Dorsolateral prefrontal cortex (tissue), 120 donors: ENCODE measurements at regions of chr7 and their contacts with region 1.

Region 1: DNA sequence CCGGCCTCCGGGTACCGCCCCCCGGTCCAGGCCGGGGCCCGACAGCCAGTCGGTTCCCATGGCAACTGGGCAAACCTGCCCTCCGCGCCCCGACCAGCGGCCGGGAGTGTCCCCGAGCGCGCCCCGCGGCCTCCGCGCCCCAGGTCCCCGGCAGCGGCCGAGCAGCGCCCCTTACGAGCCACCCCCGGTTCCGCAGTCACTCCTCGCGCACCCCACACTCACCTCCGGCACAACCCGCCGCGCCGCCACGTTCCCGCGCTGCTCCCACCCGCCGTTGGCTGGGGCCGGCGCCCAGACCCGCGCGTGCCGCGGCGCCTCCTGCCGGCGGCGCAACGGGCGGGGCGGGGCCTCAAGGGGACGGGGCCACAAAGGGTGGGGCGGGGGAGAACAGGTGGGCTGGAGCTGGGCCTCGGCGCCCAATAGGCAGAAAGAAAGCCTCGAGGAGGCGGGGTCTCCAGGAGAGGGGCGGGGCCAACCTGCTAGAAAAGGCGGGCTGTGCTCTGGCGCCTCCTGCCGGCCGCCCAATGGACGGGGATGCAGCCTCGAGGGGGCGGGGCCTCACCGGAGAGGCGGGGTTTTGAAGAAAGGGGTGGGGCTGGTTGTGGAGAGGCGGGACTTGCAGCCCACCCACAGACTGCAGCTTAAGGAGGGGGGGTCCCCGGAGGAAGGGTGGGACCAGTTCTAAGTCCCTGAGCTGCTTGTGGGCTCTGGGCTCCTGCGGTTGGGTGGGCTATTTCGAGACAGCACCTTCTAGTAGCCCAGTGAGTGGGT is at the start of gene RADIL:
- DNase-seq: peak; percentile 85 to 98 (median 94)
- H3K4me3 ChIP-seq: peak within 1 kb of the TSS; percentile 57 to 89 (median 75)
- H3K27ac ChIP-seq: peak within 1 kb of the TSS in 43 of 59 donors; percentile 0 to 82 (median 53)
- H3K27me3 ChIP-seq: no peaks in the 10 kb centered on the region
- CTCF ChIP-seq: peak; percentile 48 to 97 (median 88)
- total RNA-seq, gene RADIL: 4.3 to 23.4 (median 9.7) TPM

Region 2: GRCh38 chr7:4797858-4798705 is 85.5 kb before region 1 on chr7:
- intact Hi-C with region 1: loop called (anchors 2 to 5 kb)
- DNase-seq: peak in 7 of 10 donors; percentile 21 to 79 (median 49)
- H3K4me3 ChIP-seq: peak overlapping the region in 1 of 59 donors; percentile 6
- H3K27ac ChIP-seq: peak overlapping the region in 8 of 59 donors; percentile 9 to 57 (median 36)
- H3K27me3 ChIP-seq: no peaks in the 10 kb centered on the region
- CTCF ChIP-seq: peak; percentile 60 to 98 (median 88)

Region 3: GRCh38 chr7:4939971-4940728 is 56.6 kb after region 1 on chr7:
- intact Hi-C with region 1: loop called in 1 of 2 experiments (anchors 5 kb)
- DNase-seq: peak in 9 of 10 donors; percentile 19 to 86 (median 76)
- H3K4me3 ChIP-seq: peak overlapping the region in 5 of 59 donors; percentile 7 to 23 (median 12)
- H3K27ac ChIP-seq: peak overlapping the region in 41 of 59 donors; percentile 4 to 83 (median 53)
- H3K27me3 ChIP-seq: no peaks in the 10 kb centered on the region
- CTCF ChIP-seq: no peak